ENCODE measurements at regions of chr22 and their contacts with region 1.

Region 1: DNA sequence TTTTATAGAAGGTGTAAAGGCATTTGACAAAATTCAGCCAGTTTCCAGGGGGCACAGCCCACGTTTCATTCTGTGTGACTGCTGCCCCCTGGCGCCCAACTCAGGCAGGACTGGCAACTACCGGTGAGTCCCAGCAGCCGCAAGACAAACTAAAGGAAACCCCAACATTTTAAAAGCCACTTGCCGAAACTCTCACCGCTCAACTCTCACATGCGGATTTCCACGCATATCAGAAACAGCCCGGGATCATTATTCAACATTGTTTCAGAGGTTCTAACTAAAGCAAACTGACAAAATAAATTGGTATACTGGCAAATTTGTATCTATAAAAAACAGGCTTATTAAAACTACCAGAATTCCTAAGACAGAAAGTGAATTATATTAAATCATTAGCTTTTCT is 48.2 kb downstream of the MORC2 start:
- DNase-seq: peak; percentile 84
- H3K4me3 ChIP-seq: peak overlapping the region in 1 of 2 experiments; percentile 23; a peak in 1 of 4 replicates
- H3K27ac ChIP-seq: no peak overlapping the region
- H3K4me1 ChIP-seq: peaks cover 0 to 10% of the 10 kb centered on the region in 2 experiments; a peak in 1 of 4 replicates
- H3K27me3 ChIP-seq: no peaks in the 10 kb centered on the region
- CTCF ChIP-seq: peak; percentile 96
- EP300 ChIP-seq: no peak
- RAD21 ChIP-seq: peak; percentile 89

Region 2: DNA sequence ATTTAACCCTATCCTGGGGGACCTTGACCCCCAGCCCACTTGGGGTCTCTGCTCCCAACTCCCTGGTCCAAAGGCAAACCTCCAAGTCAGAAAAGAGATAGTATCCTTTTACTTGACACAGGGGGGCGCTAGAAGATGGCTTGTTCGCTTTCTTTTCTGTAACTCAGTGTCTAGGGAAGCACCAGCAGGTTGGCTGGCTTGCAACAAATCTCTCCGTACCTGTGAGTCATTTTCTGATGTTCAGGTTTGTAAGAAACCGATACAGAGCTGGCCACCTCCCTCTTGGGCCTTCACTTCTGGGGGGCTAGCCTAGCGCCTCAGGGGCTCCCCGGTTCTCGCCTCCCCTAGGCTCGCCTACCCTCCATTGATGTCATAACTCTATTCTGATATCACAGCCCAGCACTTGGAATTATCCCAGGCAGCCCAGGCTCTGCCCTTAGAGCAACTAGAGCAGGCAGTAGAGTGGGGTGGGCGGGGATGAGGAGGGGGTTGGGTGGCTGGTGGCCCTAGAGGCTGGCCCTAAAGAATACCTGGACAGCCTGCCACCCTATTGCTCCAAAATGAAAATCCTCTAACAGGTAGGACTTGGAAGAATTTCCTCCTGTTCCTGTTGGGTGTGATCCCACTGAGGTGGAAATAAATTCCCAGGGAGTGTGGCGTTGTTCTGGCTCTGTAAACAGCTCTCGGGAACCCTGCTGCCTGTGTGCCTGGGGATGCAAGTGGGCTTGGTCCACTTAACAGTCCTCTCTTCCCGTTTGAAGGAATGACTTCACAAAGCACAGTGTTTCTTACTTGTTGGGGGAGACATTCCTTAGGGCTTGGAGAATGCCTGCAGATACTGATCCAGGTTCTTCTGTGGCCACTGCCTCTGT is 156.4 kb before region 1 on chr22:
- CTCF ChIA-PET with region 1: interaction called, 170 read pairs
- POLR2A ChIA-PET with region 1: no interaction called
- DNase-seq: peak; percentile 72
- H3K4me3 ChIP-seq: no peak overlapping the region; a peak in 1 of 4 replicates
- H3K27ac ChIP-seq: no peak overlapping the region
- H3K4me1 ChIP-seq: no peaks in the 10 kb centered on the region
- H3K27me3 ChIP-seq: no peaks in the 10 kb centered on the region
- CTCF ChIP-seq: peak; percentile 84
- EP300 ChIP-seq: no peak
- RAD21 ChIP-seq: peak; percentile 95

Region 3: GRCh38 chr22:30872053-30873041 is 48.1 kb before region 1 on chr22:
- CTCF ChIA-PET with region 1: interaction called, 10 read pairs
- POLR2A ChIA-PET with region 1: no interaction called
- DNase-seq: peak; percentile 15
- H3K4me3 ChIP-seq: no peak overlapping the region
- H3K27ac ChIP-seq: no peak overlapping the region; a peak in 1 of 4 replicates
- H3K4me1 ChIP-seq: peaks cover 5 to 42% of the 10 kb centered on the region in 2 experiments; a peak in 1 of 4 replicates
- H3K27me3 ChIP-seq: no peaks in the 10 kb centered on the region
- CTCF ChIP-seq: no peak
- EP300 ChIP-seq: no peak
- RAD21 ChIP-seq: no peak

Region 4: GRCh38 chr22:30902496-30903357 is 17.7 kb before region 1 on chr22:
- CTCF ChIA-PET with region 1: interaction called, 46 read pairs
- POLR2A ChIA-PET with region 1: no interaction called
- DNase-seq: no peak
- H3K4me3 ChIP-seq: no peak overlapping the region
- H3K27ac ChIP-seq: no peak overlapping the region
- H3K4me1 ChIP-seq: no peaks in the 10 kb centered on the region
- H3K27me3 ChIP-seq: no peaks in the 10 kb centered on the region
- CTCF ChIP-seq: no peak
- EP300 ChIP-seq: no peak
- RAD21 ChIP-seq: no peak

Region 5: GRCh38 chr22:30953206-30953605 is 32.8 kb after region 1 on chr22:
- CTCF ChIA-PET with region 1: no interaction called
- POLR2A ChIA-PET with region 1: no interaction called
- DNase-seq: no peak
- H3K4me3 ChIP-seq: no peak overlapping the region
- H3K27ac ChIP-seq: no peak overlapping the region
- H3K4me1 ChIP-seq: no peaks in the 10 kb centered on the region
- H3K27me3 ChIP-seq: no peaks in the 10 kb centered on the region
- CTCF ChIP-seq: no peak
- EP300 ChIP-seq: no peak
- RAD21 ChIP-seq: no peak

Measured in SK-N-SH (cell line).